Mammary epithelial cell (primary cell): ENCODE measurements at regions of chr15 and their contacts with region 1.

Region 1: GRCh38 chr15:71651750-71652186 is 158.6 kb upstream of the NR2E3 start:
- DNase-seq: peak; percentile 65
- H3K4me3 ChIP-seq: no peak overlapping the region
- H3K27ac ChIP-seq: no peak overlapping the region
- H3K4me1 ChIP-seq: peaks cover 8% of the 10 kb centered on the region
- H3K27me3 ChIP-seq: no peaks in the 10 kb centered on the region
- CTCF ChIP-seq: peak; percentile 51 to 77

Region 2: DNA sequence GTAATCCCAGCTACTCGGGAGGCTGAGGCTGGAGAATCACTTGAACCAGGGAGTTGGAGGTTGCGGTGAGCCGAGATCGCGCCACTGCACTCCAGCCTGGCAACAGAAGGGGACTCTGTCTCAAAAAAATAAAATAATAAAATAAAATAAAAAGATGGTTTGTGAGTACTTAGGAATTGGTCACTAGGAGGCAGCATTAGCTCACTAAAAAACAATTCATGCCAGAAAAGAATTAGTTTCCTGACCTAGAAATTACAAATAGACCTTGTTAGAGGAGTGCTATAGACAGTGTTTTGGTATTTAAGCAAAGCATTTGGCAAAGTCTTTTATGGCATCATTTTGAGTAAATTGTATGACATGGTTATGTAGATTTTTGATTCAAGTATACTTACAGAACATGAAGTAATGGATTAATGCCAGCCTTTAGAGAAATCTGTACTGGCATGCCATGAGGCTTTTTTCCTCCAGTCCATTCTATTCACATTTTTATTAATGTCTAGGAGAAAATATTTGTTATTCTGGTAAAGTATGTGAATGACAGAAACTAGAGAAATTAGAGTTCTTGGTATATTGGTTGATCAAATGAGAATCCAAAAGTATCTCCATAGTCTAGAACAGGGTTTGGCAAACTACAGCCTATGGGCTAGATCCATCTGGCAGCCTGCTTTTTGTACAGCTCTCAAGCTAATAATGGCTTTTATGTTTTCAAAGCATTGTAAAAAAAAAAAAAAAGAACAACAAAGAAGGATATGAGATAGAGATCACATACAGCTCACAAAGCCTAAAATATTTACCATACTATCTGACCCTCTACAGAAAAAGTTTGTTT is 677.5 kb before region 1 on chr15:
- CTCF ChIA-PET with region 1: no interaction called
- dilution Hi-C with region 1: no loop called
- in situ Hi-C with region 1: no loop called
- intact Hi-C with region 1: loop called (anchors 5 kb)
- DNase-seq: peak; percentile 36
- H3K4me3 ChIP-seq: no peak overlapping the region
- H3K27ac ChIP-seq: no peak overlapping the region
- H3K4me1 ChIP-seq: no peaks in the 10 kb centered on the region
- H3K27me3 ChIP-seq: no peaks in the 10 kb centered on the region
- CTCF ChIP-seq: peak; percentile 16 to 49

Region 3: DNA sequence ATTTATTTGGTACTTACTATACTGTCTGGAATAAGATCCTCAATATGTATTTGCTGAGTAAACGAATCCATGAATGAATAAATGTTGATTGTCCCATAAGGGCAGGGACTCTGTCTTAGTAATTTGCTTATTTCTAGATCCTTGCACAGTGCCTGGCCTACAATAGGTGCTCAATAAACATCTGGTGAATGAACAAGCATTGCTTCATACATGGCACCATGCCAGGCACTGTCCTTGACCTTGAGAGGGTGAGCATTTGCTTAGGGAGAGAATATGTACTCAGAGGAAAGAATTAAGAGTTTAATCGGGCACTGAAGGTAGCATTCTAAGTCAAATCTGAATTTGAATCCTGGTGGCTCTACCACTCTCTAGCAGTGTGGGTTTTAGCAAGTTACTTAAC is 254.4 kb before region 1 on chr15:
- CTCF ChIA-PET with region 1: no interaction called
- dilution Hi-C with region 1: no loop called
- in situ Hi-C with region 1: no loop called
- intact Hi-C with region 1: no loop called
- DNase-seq: no peak
- H3K4me3 ChIP-seq: no peak overlapping the region
- H3K27ac ChIP-seq: no peak overlapping the region
- H3K4me1 ChIP-seq: no peaks in the 10 kb centered on the region
- H3K27me3 ChIP-seq: no peaks in the 10 kb centered on the region
- CTCF ChIP-seq: no peak

Region 4: GRCh38 chr15:71455107-71455506 is 196.7 kb before region 1 on chr15:
- CTCF ChIA-PET with region 1: no interaction called
- dilution Hi-C with region 1: no loop called
- in situ Hi-C with region 1: loop called in 1 of 2 experiments (anchors 10 kb)
- intact Hi-C with region 1: no loop called
- DNase-seq: no peak
- H3K4me3 ChIP-seq: no peak overlapping the region
- H3K27ac ChIP-seq: no peak overlapping the region
- H3K4me1 ChIP-seq: no peaks in the 10 kb centered on the region
- H3K27me3 ChIP-seq: no peaks in the 10 kb centered on the region
- CTCF ChIP-seq: no peak

Region 5: DNA sequence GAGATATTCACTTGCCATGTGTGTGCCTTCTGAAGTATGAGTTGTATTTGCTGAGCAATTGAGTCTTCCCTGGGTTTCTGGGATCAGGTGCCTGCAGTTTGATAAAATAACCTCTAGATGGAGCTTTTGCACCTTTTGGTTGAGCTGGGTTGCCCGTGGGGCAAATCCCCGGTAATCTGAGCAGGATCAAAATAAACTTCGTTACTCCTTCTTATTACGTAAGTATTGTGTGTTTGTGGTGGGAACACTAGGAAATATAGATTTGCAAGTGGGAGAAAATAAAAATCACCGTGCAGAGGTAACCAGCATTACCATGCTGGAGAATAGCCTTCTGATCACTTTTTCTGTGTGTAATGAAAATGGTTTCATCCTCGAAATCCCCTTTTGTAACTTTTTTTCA is 118.8 kb before region 1 on chr15:
- CTCF ChIA-PET with region 1: no interaction called
- dilution Hi-C with region 1: no loop called
- in situ Hi-C with region 1: loop called in 1 of 2 experiments (anchors 5 kb)
- intact Hi-C with region 1: loop called (anchors 1 kb)
- DNase-seq: peak; percentile 63
- H3K4me3 ChIP-seq: no peak overlapping the region
- H3K27ac ChIP-seq: no peak overlapping the region
- H3K4me1 ChIP-seq: peaks cover 8% of the 10 kb centered on the region
- H3K27me3 ChIP-seq: no peaks in the 10 kb centered on the region
- CTCF ChIP-seq: peak; percentile 74 to 81

Region 6: DNA sequence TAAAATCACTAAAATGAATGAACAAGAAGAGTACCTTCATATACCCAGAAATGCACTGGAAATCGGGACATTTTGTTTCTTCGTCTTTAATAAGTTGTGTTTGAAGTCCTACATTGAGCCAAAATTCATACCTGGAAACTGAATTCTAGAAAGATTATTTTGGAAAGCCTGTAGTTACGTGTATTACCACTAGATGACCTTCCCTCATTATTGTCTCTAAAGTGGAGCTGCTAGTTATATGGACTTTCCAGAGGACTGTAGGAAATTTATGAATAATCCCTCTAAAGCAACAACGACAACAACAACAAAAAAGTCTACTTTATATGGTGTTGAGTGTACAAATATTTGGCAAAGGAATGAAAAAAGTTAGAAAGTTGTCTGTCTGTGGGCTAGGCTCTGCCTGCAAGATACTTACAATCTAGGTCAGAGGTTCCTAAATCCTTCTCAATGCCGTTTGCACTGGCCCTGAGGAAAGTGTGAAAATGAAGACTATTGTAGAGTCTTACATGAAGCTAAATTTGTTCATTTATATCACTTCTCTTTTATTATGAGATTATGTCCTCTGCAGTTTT is 76.2 kb before region 1 on chr15:
- CTCF ChIA-PET with region 1: no interaction called
- dilution Hi-C with region 1: loop called (anchors 5 kb)
- in situ Hi-C with region 1: no loop called
- intact Hi-C with region 1: loop called (anchors 1 kb)
- DNase-seq: no peak
- H3K4me3 ChIP-seq: no peak overlapping the region
- H3K27ac ChIP-seq: no peak overlapping the region
- H3K4me1 ChIP-seq: peaks cover 18% of the 10 kb centered on the region
- H3K27me3 ChIP-seq: no peaks in the 10 kb centered on the region
- CTCF ChIP-seq: peak; percentile 59 to 66

Region 7: DNA sequence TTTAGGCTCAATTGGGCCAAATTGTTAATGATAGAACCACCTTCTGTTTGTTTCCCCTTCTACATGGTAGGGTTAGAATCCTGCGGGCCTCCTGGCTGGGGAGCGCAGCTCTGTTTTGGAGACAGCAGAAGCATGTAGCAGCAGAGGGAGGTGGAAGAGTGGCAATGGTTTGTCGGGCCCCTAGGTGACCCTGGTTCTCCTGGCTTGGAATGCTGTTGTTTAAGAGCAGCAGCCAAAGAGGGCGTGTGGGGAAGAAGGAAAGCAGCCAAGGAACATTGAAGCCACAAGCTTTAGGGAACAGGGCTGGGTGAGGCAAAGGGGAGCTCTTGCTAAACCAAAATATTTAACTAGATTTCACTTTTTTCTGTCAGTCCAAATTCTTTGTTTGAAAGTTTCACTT is 55.1 kb before region 1 on chr15:
- CTCF ChIA-PET with region 1: no interaction called
- dilution Hi-C with region 1: no loop called
- in situ Hi-C with region 1: no loop called
- intact Hi-C with region 1: no loop called
- DNase-seq: no peak
- H3K4me3 ChIP-seq: no peak overlapping the region
- H3K27ac ChIP-seq: no peak overlapping the region
- H3K4me1 ChIP-seq: no peaks in the 10 kb centered on the region
- H3K27me3 ChIP-seq: no peaks in the 10 kb centered on the region
- CTCF ChIP-seq: no peak

Region 8: GRCh38 chr15:71730277-71731144 is 78.7 kb after region 1 on chr15:
- CTCF ChIA-PET with region 1: no interaction called
- dilution Hi-C with region 1: no loop called
- in situ Hi-C with region 1: no loop called
- intact Hi-C with region 1: loop called (anchors 2 kb)
- DNase-seq: peak; percentile 45
- H3K4me3 ChIP-seq: no peak overlapping the region
- H3K27ac ChIP-seq: no peak overlapping the region
- H3K4me1 ChIP-seq: no peaks in the 10 kb centered on the region
- H3K27me3 ChIP-seq: no peaks in the 10 kb centered on the region
- CTCF ChIP-seq: peak; percentile 75 to 81